Motor neuron (in vitro differentiated cells): ENCODE measurements at regions of chr12 and their contacts with region 1.

Region 1: DNA sequence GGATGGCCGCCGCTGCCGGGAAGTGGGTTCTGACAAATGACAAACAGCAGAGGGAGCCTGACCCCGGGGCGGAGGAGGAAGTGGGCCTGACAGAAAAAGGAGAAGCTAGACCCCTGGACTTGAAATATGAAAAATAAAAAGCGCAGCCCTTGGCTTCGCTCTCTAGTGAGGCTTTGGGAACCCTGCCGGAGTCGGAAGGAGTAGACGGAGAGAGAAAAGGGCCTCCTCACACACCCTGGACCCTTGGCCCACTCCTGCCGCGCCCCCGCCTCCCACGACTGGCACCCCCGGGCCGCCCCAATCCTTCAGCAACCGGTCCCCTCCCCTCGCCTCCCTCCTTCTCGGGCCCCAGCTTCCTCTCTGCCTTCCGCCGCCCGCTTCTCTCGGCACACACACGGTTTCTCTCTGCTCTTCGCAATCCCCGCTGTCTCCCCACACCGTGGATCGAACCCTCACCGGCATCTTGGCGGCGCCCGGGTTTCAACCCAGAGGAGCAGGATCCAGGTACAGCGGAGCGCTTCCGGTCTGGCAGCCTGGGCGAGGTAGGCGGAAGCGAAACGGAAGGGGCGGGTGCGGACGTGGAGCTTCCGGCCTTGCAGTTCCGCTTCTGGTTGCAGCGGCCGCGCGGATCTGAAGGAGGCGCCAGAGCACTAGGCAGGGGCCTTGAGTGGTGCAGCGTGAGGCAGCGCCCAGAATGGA is at the start of gene ARPC3:
- ATAC-seq: peak; percentile 94 to 99 (median 98)
- H3K4me3 ChIP-seq: peak within 1 kb of the TSS; percentile 74 to 96 (median 88)
- H3K27ac ChIP-seq: peak within 1 kb of the TSS; percentile 92 to 98
- H3K4me1 ChIP-seq: peaks cover 5 to 8% of the 10 kb centered on the region in 2 donors
- total RNA-seq, gene ARPC3: 196 to 324 (median 263) TPM

Region 2: DNA sequence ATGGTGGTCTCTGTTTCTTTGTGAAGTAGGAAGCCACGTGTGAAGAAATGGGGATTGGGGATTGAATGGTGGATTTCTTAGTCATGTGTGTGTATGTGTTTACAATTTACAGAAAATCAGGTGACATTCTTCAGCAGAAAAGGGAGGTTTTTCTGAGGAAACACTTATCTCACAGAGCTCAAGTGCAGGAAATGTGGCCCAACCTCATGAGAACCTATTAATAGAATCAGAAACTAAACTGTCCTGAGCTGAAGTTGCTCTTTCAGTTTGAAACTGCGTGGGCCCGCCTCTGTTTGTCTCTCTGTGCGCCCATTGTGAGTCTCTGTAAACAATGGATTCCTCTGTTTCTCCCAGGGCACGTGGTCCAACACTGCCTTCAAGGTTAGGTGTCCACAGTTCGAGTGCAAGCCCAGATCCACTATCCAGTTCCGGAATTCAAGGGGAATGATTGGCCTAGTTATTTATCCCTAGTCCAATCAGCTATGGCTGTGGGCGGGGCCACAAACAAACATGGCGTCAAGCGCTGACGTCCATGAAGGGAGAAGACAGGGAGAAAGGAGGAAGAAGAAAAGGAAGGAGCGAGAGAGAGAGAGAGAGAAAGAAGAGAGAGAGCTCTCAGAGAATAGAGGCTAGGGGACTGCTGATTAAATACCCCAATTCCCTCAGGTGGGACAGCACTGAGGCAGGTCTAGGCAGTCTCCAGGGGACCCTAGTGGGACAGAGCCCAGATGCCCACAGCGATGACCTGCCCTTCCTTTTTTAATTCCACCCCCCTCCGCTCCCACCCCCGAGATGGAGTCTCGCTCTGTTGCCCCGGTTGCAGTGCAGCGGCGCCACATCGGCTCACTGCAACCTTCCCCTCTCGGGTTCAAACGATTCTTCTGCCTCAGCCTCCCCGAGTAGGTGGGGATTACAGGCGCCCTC is 370.2 kb before region 1 on chr12:
- in situ Hi-C with region 1: loop called in 2 of 9 experiments (anchors 25 kb)
- ATAC-seq: peak in 2 of 8 experiments; percentile 38 to 74
- H3K4me3 ChIP-seq: no peak overlapping the region
- H3K27ac ChIP-seq: no peak overlapping the region
- H3K4me1 ChIP-seq: no peaks in the 10 kb centered on the region

Region 3: DNA sequence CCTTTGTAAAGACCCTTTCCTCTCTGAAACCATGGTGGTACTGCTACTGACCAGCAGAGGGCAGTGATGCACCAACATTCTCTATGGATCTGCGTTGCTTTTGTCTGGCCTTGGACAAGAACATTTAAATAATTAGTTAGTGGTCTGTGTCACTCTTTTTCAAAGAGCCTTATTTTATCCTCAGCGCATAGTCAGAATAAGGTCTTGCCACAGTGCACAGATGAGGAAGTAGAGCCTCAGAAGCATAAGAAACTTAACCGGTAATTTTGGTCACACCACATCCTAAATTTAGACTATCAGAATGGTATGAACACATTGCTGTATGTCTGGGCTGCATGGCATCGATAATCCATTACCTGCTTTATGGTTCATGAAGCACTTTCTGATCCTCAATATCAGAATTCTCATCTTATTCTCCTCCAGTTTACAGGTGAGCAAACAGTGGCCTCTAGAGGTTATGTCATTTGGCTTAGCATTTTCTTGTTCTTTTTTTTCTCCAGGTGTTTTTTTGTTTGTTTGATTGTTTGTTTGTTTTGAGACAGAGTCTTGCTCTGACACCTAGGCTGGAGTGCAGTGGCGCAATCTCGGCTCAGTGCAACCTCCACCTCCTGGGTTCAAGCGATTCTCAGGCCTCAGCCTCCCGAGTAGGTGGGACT is 349.5 kb before region 1 on chr12:
- in situ Hi-C with region 1: loop called in 7 of 9 experiments (anchors 25 kb)
- ATAC-seq: peak; percentile 79 to 92 (median 88)
- H3K4me3 ChIP-seq: no peak overlapping the region
- H3K27ac ChIP-seq: no peak overlapping the region
- H3K4me1 ChIP-seq: peaks cover 3% of the 10 kb centered on the region in 2 donors

Region 4: DNA sequence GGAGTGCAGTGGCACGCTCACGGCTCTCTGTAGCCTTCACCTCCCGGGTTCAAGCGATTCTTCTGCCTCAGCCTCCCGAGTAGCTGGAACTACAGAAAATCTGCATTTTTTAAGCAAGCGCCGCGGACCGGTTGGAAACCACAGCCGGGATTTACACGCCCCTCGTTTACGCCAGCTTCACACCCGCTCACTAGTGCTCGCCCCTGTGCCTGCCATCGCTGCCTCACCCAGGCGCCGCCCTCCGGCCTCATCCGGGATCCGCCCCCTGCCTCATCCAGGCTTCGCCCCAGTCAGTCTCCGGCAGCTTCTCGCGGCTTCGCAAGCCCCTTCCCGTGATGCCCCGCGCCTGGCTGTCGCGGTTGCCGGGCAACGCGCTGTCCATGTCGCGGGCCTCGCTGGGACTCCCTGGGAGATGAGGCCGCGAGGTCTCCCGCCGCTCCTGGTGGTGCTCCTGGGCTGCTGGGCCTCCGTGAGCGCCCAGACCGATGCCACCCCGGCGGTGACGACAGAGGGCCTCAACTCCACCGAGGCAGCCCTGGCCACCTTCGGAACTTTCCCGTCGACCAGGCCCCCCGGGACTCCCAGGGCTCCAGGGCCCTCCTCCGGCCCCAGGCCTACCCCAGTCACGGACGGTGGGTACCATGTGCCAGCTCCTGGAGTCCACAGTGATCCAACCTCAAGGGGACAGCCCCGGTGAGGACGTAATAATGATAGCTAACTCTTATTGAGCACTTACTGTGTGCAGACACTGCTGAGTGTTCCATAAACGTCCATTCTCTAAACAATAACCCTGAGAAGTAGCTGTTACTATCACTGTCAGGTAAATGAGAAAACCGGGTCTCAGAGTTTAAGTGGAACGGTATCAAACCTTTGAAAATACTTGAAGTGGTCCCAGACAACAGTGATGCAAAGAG is 164.1 kb after region 1 on chr12 and contains the start of gene TCTN1:
- in situ Hi-C with region 1: no loop called
- ATAC-seq: peak; percentile 94 to 99 (median 98)
- H3K4me3 ChIP-seq: peak within 1 kb of the TSS; percentile 54 to 60 (median 55)
- H3K27ac ChIP-seq: peak within 1 kb of the TSS; percentile 66 to 74
- H3K4me1 ChIP-seq: peaks cover 6 to 8% of the 10 kb centered on the region in 2 donors
- total RNA-seq, gene TCTN1: 37.7 to 116 (median 51.4) TPM

Region 5: GRCh38 chr12:110689281-110690126 is 239.6 kb after region 1 on chr12:
- in situ Hi-C with region 1: no loop called
- ATAC-seq: peak; percentile 62 to 81 (median 77)
- H3K4me3 ChIP-seq: peak overlapping the region in 4 of 5 donors; percentile 18 to 35 (median 35)
- H3K27ac ChIP-seq: no peak overlapping the region
- H3K4me1 ChIP-seq: peaks cover 0 to 7% of the 10 kb centered on the region in 2 donors

Region 6: GRCh38 chr12:110888256-110888991 is 438.5 kb after region 1 on chr12:
- in situ Hi-C with region 1: loop called in 1 of 9 experiments (anchors 25 kb)
- ATAC-seq: no peak
- H3K4me3 ChIP-seq: peak overlapping the region in 1 of 5 donors; percentile 4
- H3K27ac ChIP-seq: no peak overlapping the region
- H3K4me1 ChIP-seq: peaks cover 16 to 20% of the 10 kb centered on the region in 2 donors